ENCODE measurements at regions of chr2 and their contacts with region 1.

Region 1: GRCh38 chr2:134973241-134974138 is 54.9 kb downstream of the CCNT2 start:
- DNase-seq: no peak
- ATAC-seq: no peak
- H3K4me3 ChIP-seq: no peak overlapping the region
- H3K4me3 Mint-ChIP-seq: peak overlapping the region in 2 of 10 donors; percentile 25 to 26
- H3K27ac ChIP-seq: no peak overlapping the region
- H3K27ac Mint-ChIP-seq: peak overlapping the region in 1 of 9 donors; percentile 24
- H3K4me1 ChIP-seq: no peaks in the 10 kb centered on the region
- H3K4me1 Mint-ChIP-seq: peaks cover 0 to 12% (median 2%) of the 10 kb centered on the region in 7 donors
- H3K27me3 ChIP-seq: no peaks in the 10 kb centered on the region
- H3K27me3 Mint-ChIP-seq: peaks cover 0 to 14% (median 4%) of the 10 kb centered on the region in 5 donors

Region 2: GRCh38 chr2:136550181-136550580 is 1576.7 kb after region 1 on chr2:
- CTCF ChIA-PET with region 1: no interaction called
- POLR2A ChIA-PET with region 1: no interaction called
- intact Hi-C with region 1: loop called in 1 of 2 experiments (anchors 10 kb)
- DNase-seq: no peak
- ATAC-seq: no peak
- H3K4me3 ChIP-seq: no peak overlapping the region
- H3K4me3 Mint-ChIP-seq: no peak overlapping the region
- H3K27ac ChIP-seq: no peak overlapping the region
- H3K27ac Mint-ChIP-seq: no peak overlapping the region
- H3K4me1 ChIP-seq: no peaks in the 10 kb centered on the region
- H3K4me1 Mint-ChIP-seq: no peaks in the 10 kb centered on the region
- H3K27me3 ChIP-seq: no peaks in the 10 kb centered on the region
- H3K27me3 Mint-ChIP-seq: peaks cover 0 to 27% (median 25%) of the 10 kb centered on the region in 5 donors